Activated B cell treated with CpG ODN at 0.5 μM for 24 hours (primary cell): ENCODE measurements at regions of chr7 and their contacts with region 1.

Region 1: GRCh38 chr7:130205084-130205947 is at the start of gene TMEM209:
- DNase-seq: peak; percentile 83
- ATAC-seq: peak; percentile 98
- H3K4me3 Mint-ChIP-seq: peak within 1 kb of the TSS; percentile 100
- H3K27ac Mint-ChIP-seq: peak within 1 kb of the TSS; percentile 100
- H3K4me1 Mint-ChIP-seq: peaks cover 20% of the 10 kb centered on the region
- H3K27me3 Mint-ChIP-seq: peaks cover 3% of the 10 kb centered on the region
- CTCF ChIP-seq: no peak
- total RNA-seq, gene TMEM209: 30.0 and 32.6 TPM in 2 replicates

Region 2: DNA sequence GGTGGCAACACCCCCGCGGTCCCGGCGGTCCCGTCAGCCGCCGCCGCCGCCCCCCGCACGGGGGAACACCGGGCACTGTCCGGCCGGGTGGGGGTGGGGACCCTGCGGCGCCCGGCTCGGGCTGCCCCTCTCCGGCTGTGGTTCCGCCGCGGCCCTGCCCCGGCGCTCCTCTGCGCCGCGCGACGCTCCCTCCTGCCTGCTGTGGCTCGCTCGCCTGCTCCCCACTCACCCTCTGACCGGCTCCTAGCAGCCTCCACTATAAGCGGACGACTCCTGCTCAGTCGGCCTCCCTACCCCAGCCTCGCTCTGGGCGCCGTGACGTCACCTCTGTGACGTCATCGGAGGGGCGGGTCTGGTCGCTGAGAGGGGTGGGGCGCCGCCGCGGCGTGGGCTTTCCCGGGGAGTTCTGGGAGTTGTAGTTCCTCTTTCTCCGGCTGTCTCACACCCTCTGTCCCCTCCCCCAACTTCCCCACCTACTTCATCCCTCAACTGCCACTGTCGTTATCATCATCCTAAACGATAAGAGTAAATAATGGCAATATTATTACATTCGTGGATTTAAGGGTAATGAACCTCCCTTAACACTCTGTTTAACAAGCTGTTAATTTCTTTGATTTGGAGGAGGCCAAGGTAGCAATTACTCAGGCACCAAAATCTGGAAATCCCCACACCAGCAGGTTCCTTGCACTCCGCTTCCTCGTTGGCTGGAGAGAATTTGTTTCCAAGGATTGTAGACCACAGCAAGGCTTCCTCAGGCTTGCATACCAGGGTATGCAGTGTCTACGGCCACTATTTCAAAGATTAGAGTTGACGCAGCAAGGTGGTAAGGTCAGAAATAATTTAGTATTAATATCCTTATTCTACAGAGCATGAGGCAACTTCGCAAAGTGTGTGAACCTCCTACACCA is 252.4 kb before region 1 on chr7 and contains the start of gene UBE2H:
- CTCF ChIA-PET with region 1: no interaction called
- POLR2A ChIA-PET with region 1: no interaction called
- intact Hi-C with region 1: loop called (anchors 5 kb)
- DNase-seq: peak; percentile 89
- ATAC-seq: peak; percentile 73
- H3K4me3 Mint-ChIP-seq: peak within 1 kb of the TSS; percentile 98
- H3K27ac Mint-ChIP-seq: peak within 1 kb of the TSS; percentile 98
- H3K4me1 Mint-ChIP-seq: peaks cover 10% of the 10 kb centered on the region
- H3K27me3 Mint-ChIP-seq: no peaks in the 10 kb centered on the region
- CTCF ChIP-seq: no peak
- total RNA-seq, gene UBE2H: 28.8 and 32.6 TPM in 2 replicates

Region 3: DNA sequence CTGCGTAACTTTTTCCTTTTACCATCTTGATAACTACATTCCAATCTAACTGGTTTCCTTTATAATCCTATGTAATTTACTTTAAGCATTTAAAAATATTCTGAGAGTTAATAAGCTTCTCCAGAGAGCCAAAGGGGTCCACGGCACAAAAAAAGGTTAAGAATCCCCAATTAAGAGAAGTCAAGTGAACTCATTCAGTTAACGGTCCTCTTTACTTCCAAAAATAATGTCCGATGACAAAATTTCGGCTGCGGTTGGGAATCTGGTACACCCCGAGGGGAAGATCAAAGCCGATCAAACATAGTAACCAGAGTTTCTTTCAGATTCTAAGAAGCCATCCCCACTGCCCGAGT is 154.6 kb before region 1 on chr7:
- CTCF ChIA-PET with region 1: no interaction called
- POLR2A ChIA-PET with region 1: interaction called, 7 read pairs
- intact Hi-C with region 1: loop called (anchors 1 kb)
- DNase-seq: no peak
- ATAC-seq: no peak
- H3K4me3 Mint-ChIP-seq: peak overlapping the region; percentile 98
- H3K27ac Mint-ChIP-seq: peak overlapping the region; percentile 93
- H3K4me1 Mint-ChIP-seq: peaks cover 12% of the 10 kb centered on the region
- H3K27me3 Mint-ChIP-seq: no peaks in the 10 kb centered on the region
- CTCF ChIP-seq: no peak

Region 4: GRCh38 chr7:130149281-130150139 is 55.8 kb before region 1 on chr7:
- CTCF ChIA-PET with region 1: no interaction called
- POLR2A ChIA-PET with region 1: interaction called, 17 read pairs
- intact Hi-C with region 1: loop called (anchors 1 kb)
- DNase-seq: no peak
- ATAC-seq: peak; percentile 80
- H3K4me3 Mint-ChIP-seq: peak overlapping the region; percentile 46
- H3K27ac Mint-ChIP-seq: peak overlapping the region; percentile 77
- H3K4me1 Mint-ChIP-seq: peaks cover 51% of the 10 kb centered on the region
- H3K27me3 Mint-ChIP-seq: no peaks in the 10 kb centered on the region
- CTCF ChIP-seq: no peak

Region 5: GRCh38 chr7:130440527-130441365 is 235.4 kb after region 1 on chr7 and contains the start of gene CEP41:
- CTCF ChIA-PET with region 1: no interaction called
- POLR2A ChIA-PET with region 1: interaction called, 9 read pairs
- intact Hi-C with region 1: loop called (anchors 1 kb)
- DNase-seq: peak; percentile 89
- ATAC-seq: peak; percentile 97
- H3K4me3 Mint-ChIP-seq: peak within 1 kb of the TSS; percentile 99
- H3K27ac Mint-ChIP-seq: peak within 1 kb of the TSS; percentile 95
- H3K4me1 Mint-ChIP-seq: peaks cover 14% of the 10 kb centered on the region
- H3K27me3 Mint-ChIP-seq: peaks cover 5% of the 10 kb centered on the region
- CTCF ChIP-seq: no peak
- total RNA-seq, gene CEP41: 5.1 and 6.6 TPM in 2 replicates

Region 6: DNA sequence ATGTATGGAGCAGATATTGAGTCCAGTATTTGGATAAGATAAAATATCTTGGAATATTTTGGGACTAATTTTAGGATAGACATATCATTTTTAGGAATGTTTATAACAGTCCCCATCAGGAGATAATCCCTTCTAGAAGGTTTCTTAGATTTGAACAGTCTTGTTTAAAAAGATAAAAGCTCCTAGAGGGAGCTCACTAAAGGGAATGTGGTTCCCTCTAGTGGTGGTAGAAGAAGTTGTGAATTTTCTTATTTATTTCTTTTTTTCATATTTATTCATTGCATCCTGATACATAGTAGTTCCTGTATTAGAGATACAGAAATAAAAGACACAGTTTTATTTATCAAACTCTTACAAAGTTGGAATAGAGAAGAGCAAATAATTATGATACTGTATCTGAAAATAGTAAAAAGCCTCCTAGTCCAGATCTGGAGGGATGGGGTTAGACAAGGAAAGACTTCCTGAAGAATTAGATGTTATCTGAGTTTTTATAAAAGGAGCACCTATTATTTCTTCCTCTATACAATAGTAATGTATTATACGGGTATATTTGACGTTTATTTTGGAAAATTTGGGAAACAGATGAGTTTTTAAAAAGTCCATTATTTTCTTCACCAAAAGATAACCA is 553.2 kb after region 1 on chr7:
- CTCF ChIA-PET with region 1: interaction called, 4 read pairs
- POLR2A ChIA-PET with region 1: interaction called, 4 read pairs
- intact Hi-C with region 1: loop called (anchors 10 kb)
- DNase-seq: no peak
- ATAC-seq: peak; percentile 40
- H3K4me3 Mint-ChIP-seq: no peak overlapping the region
- H3K27ac Mint-ChIP-seq: no peak overlapping the region
- H3K4me1 Mint-ChIP-seq: no peaks in the 10 kb centered on the region
- H3K27me3 Mint-ChIP-seq: peaks cover 3% of the 10 kb centered on the region
- CTCF ChIP-seq: peak; percentile 47